ENCODE measurements at regions of chr3 and their contacts with region 1.

Region 1: GRCh38 chr3:186849374-186849975 is 7.0 kb downstream of the ADIPOQ start:
- DNase-seq: peak; percentile 85
- H3K4me3 ChIP-seq: no peak overlapping the region
- H3K27ac ChIP-seq: no peak overlapping the region
- H3K4me1 ChIP-seq: peaks cover 16% of the 10 kb centered on the region
- CTCF ChIP-seq: peak; percentile 91

Region 2: DNA sequence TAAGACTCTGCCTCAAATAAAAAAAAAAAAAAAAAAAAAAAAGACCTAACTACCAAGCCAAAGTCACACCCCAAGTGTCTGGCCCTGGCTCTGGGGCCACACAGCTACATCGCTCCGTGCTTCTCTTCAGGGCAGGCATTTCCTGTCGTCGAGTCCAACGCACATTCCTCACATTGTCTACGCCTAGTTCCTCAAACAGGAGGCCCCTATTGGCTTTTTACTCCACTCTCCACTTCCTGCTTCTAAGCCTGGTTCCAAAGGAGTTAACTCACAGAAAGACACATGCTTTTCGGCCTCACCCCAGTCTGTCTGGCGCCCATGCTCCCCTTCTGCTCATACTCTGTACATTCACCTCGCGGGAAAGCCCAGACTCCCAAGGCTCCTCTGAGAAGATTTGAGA is 103.5 kb before region 1 on chr3:
- CTCF ChIA-PET with region 1: no interaction called
- POLR2A ChIA-PET with region 1: no interaction called
- intact Hi-C with region 1: no loop called
- DNase-seq: no peak
- H3K4me3 ChIP-seq: no peak overlapping the region
- H3K27ac ChIP-seq: no peak overlapping the region
- H3K4me1 ChIP-seq: no peaks in the 10 kb centered on the region
- CTCF ChIP-seq: no peak

Region 3: DNA sequence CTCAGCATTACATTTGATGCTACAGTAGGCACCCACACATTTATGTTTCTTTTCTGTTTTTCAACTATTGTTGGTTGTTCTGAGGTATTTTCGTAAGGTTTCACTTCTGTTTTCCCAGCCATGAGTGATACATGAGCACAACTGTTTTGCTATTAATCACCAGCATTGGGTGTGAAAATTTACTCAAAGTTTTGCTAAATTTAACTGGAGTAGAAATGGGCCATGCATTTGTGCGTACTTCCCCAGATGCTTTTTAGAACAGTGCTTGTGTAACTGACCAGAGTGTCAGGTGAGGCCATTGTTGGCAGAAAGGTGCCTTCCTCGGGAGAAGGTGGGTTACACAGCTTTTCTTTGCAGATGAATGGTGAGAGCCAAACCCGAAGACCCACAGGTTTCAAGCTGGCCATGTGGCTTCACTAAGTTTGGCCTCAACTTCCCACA is 151.3 kb after region 1 on chr3:
- CTCF ChIA-PET with region 1: interaction called, 4 read pairs
- POLR2A ChIA-PET with region 1: interaction called, 9 read pairs
- intact Hi-C with region 1: loop called (anchors 5 kb)
- DNase-seq: peak; percentile 92
- H3K4me3 ChIP-seq: peak overlapping the region; percentile 77
- H3K27ac ChIP-seq: peak overlapping the region; percentile 98
- H3K4me1 ChIP-seq: peaks cover 72% of the 10 kb centered on the region
- CTCF ChIP-seq: no peak

Region 4: DNA sequence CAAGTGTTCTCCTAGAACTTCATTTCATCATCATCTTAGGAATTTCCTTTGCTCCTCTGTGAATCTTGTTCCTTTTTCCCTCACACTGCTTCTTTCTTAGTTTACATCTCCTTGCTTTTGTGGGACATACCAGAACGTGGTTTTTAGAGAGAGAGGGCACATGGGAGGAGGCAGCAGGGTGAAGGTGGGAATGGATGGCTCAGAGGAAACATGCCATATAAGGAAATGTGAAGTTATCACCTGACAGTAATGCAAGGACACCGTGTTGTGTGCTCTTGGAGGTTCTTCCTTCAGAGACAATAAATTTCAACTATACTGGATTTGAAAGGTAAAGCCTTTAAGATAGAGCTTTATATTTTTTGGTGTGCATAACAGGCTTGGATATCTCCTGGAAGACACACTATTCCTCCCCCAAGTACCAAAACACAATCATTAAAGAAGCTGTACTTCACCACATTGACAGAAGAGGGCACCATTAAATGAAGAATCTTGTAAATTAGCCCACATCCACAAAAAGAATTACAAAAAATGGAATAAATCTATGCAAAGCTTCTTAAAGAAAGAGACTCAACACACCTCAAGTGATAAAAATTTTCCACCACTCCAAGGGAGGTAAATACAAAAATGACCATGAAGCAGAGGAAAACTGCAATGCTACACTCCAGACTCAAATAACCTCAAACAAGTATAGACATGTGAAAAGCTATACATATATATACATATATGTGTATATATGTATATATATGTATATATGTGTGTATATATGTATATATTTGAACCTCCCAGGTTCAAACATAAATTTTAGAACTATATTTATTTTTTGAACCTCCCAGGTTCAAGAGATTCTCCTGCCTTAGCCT is 263.7 kb after region 1 on chr3:
- CTCF ChIA-PET with region 1: no interaction called
- POLR2A ChIA-PET with region 1: no interaction called
- intact Hi-C with region 1: loop called (anchors 1 kb)
- DNase-seq: peak; percentile 55
- H3K4me3 ChIP-seq: no peak overlapping the region
- H3K27ac ChIP-seq: no peak overlapping the region
- H3K4me1 ChIP-seq: peaks cover 14% of the 10 kb centered on the region
- CTCF ChIP-seq: peak; percentile 91

Region 5: DNA sequence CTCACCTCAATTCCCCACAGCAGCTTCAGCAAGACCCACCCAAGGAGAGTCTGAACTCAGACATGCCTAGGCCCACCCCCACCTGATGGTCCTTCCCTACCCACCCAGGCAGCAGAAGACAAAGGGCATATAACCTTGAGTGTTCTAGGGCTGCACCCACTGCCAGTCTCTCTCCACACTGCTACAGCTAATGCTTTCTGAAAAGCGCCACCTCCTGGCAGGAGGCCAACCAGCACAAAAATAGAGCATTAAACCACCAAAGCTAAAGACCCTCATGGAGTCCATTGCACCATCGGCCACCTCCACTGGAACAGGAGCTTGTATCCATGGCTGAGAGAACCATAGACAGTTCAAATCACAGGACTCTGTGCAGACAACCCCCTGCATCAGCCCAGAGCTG is 301.1 kb after region 1 on chr3:
- CTCF ChIA-PET with region 1: interaction called, 10 read pairs
- POLR2A ChIA-PET with region 1: interaction called, 3 read pairs
- intact Hi-C with region 1: loop called (anchors 5 kb)
- DNase-seq: peak; percentile 64
- H3K4me3 ChIP-seq: no peak overlapping the region
- H3K27ac ChIP-seq: no peak overlapping the region
- H3K4me1 ChIP-seq: no peaks in the 10 kb centered on the region
- CTCF ChIP-seq: peak; percentile 76

Region 6: DNA sequence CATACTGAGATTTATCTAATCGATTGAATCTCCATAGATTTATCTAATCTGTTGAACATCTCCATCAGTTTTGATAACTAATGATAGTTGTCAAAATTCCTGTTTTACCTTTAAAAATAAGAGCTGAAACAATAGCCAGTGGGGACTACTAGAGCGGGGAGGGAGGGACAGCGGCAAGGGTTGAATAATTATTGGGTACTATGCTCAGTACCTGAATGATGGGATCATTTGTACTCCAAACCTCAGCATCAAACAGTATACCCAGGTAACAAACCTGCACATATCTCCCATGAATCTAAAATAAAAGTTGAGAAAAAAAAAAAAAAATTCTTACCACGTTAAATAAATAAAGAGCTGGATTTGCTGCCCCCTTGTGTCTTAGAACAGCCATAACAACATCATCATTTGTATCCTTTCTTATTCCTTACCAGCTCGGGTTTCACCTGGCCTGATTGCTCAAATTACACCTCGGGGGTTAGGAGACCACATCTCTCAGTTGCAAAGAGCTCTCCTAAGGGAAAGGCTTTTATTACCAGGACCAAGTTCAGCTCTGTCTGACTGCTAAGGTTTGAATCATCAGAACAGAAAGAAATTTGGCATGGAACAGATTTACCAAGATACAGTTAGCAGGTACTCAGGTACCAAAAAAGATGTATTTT is 315.5 kb after region 1 on chr3:
- CTCF ChIA-PET with region 1: interaction called, 7 read pairs
- POLR2A ChIA-PET with region 1: interaction called, 4 read pairs
- intact Hi-C with region 1: loop called (anchors 1 kb)
- DNase-seq: peak; percentile 79
- H3K4me3 ChIP-seq: no peak overlapping the region
- H3K27ac ChIP-seq: no peak overlapping the region
- H3K4me1 ChIP-seq: no peaks in the 10 kb centered on the region
- CTCF ChIP-seq: peak; percentile 92